ENCODE measurements at regions of chr5 and their contacts with region 1.

Region 1: GRCh38 chr5:159156426-159157238 is 52.7 kb downstream of the RNF145 start:
- DNase-seq: peak; percentile 62
- ATAC-seq: peak; percentile 80
- H3K4me3 Mint-ChIP-seq: no peak overlapping the region
- H3K27ac Mint-ChIP-seq: peak overlapping the region; percentile 48
- H3K4me1 Mint-ChIP-seq: peaks cover 27% of the 10 kb centered on the region
- H3K27me3 Mint-ChIP-seq: peaks cover under 1% of the 10 kb centered on the region

Region 2: GRCh38 chr5:158951436-158952247 is 205.0 kb before region 1 on chr5:
- CTCF ChIA-PET with region 1: no interaction called
- POLR2A ChIA-PET with region 1: no interaction called
- DNase-seq: no peak
- ATAC-seq: no peak
- H3K4me3 Mint-ChIP-seq: no peak overlapping the region
- H3K27ac Mint-ChIP-seq: no peak overlapping the region
- H3K4me1 Mint-ChIP-seq: no peaks in the 10 kb centered on the region
- H3K27me3 Mint-ChIP-seq: no peaks in the 10 kb centered on the region

Region 3: GRCh38 chr5:159209438-159210305 is 53.0 kb after region 1 on chr5 and contains the start of gene RNF145:
- CTCF ChIA-PET with region 1: interaction called, 18 read pairs
- POLR2A ChIA-PET with region 1: interaction called, 4 read pairs
- DNase-seq: peak; percentile 85
- ATAC-seq: peak; percentile 80
- H3K4me3 Mint-ChIP-seq: peak within 1 kb of the TSS; percentile 93
- H3K27ac Mint-ChIP-seq: peak within 1 kb of the TSS; percentile 97
- H3K4me1 Mint-ChIP-seq: peaks cover 54% of the 10 kb centered on the region
- H3K27me3 Mint-ChIP-seq: no peaks in the 10 kb centered on the region
- total RNA-seq, gene RNF145: 140 to 143 TPM

Region 4: DNA sequence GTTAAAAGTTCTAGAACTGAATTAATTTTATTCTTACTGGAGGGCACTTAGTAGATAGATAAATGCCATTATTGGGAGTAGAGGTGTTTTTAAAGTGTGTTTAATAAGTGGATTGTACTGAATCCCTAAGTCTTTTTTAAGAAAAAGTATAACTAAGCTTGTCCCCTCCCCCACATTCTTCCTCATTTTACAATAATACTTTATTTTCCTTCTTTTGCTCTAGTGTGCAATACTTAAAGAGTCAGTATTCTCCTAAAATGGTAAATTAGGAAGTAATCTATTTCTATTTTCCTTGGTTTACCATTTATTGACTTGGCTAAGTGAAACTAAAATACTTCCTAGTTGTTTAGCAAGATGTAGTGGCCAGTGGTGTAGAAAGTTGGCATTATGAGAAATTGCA is 118.0 kb after region 1 on chr5:
- CTCF ChIA-PET with region 1: interaction called, 13 read pairs
- POLR2A ChIA-PET with region 1: no interaction called
- DNase-seq: no peak
- ATAC-seq: no peak
- H3K4me3 Mint-ChIP-seq: peak overlapping the region; percentile 25
- H3K27ac Mint-ChIP-seq: no peak overlapping the region
- H3K4me1 Mint-ChIP-seq: peaks cover 18% of the 10 kb centered on the region
- H3K27me3 Mint-ChIP-seq: no peaks in the 10 kb centered on the region

Region 5: DNA sequence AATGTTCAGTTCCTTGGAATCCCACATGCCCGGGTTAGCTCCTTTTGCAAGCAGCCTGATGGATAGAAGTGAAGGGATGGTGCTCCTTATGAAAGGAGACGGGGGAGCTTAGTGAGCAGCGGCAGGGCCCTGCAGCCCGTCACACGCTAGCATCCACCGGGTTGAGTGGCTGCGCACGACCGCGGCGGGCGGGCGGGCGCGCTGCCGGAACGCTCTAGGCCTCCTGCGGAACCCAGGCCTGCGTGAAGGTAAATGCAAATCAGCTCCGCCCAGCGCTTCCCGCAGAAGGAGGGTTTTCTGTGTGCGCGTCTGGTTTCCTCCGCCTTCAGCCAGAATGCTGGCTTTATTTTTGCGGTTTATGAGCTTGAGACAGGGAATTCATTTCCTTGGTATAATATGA is 153.9 kb after region 1 on chr5:
- CTCF ChIA-PET with region 1: interaction called, 83 read pairs
- POLR2A ChIA-PET with region 1: no interaction called
- DNase-seq: peak; percentile 49
- ATAC-seq: peak; percentile 94
- H3K4me3 Mint-ChIP-seq: peak overlapping the region; percentile 41
- H3K27ac Mint-ChIP-seq: no peak overlapping the region
- H3K4me1 Mint-ChIP-seq: peaks cover 13% of the 10 kb centered on the region
- H3K27me3 Mint-ChIP-seq: peaks cover 44% of the 10 kb centered on the region

Region 6: DNA sequence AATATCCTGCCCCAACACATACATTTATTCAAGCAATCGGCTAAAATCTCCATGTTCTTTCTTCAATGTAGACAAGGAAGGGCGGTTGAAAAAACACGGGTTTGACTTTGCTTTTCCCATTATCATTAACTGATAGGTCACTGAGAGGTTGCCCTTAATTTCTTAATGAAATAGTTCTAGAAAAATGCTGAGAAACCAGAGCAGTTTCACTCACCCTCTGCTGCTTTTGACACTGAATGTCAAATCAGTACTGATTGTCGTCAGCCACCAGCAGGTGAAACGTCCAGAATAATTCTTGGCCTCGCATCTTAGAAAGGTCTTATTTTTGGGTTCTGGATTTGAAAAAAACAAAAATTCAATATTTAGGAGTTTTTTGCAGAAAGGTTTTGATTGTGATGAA is 165.5 kb after region 1 on chr5:
- CTCF ChIA-PET with region 1: interaction called, 83 read pairs
- POLR2A ChIA-PET with region 1: no interaction called
- DNase-seq: no peak
- ATAC-seq: no peak
- H3K4me3 Mint-ChIP-seq: no peak overlapping the region
- H3K27ac Mint-ChIP-seq: no peak overlapping the region
- H3K4me1 Mint-ChIP-seq: no peaks in the 10 kb centered on the region
- H3K27me3 Mint-ChIP-seq: peaks cover 24% of the 10 kb centered on the region